HEK293 (cell line): ENCODE measurements at regions of chr6 and their contacts with region 1.

Region 1: DNA sequence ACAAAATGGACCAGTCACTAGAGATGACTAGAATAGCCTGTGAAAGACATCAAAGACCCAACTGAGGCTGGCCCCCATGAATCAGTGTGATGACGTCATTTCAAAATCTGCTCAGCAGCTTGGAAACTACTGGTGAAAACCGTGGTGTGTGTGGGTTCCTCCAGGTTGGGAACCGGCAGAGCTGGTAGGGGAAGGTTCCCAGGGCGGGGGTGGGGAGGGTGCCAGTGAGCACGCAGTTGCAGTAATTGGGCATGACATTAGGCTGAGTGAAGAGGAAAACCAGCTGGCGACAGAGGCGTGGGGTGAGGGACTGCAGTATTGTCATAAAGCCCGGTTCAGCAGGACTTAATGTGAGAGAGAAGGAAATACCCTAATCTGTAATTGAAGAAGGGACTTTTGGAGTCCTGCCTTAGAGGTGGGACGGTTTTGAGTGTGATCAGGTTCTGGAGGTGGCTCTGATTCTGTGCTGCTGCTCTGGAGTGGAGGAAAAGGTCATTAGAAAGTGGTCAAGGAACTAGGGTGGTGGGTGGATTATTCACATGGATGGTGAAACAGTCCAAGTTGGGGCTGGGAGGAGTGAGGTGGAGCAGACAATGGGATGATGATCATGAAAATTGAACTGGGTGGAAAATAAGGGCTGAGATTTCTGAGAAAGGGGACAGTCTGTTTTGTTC is 52.0 kb upstream of the MTHFD1L start:
- H3K4me3 ChIP-seq: no peak overlapping the region
- H3K27ac ChIP-seq: no peak overlapping the region; the same call in 1 of the 2 replicates
- H3K4me1 ChIP-seq: peaks cover 11% of the 10 kb centered on the region; the same call in 1 of the 2 replicates
- CTCF ChIP-seq: no peak

Region 2: DNA sequence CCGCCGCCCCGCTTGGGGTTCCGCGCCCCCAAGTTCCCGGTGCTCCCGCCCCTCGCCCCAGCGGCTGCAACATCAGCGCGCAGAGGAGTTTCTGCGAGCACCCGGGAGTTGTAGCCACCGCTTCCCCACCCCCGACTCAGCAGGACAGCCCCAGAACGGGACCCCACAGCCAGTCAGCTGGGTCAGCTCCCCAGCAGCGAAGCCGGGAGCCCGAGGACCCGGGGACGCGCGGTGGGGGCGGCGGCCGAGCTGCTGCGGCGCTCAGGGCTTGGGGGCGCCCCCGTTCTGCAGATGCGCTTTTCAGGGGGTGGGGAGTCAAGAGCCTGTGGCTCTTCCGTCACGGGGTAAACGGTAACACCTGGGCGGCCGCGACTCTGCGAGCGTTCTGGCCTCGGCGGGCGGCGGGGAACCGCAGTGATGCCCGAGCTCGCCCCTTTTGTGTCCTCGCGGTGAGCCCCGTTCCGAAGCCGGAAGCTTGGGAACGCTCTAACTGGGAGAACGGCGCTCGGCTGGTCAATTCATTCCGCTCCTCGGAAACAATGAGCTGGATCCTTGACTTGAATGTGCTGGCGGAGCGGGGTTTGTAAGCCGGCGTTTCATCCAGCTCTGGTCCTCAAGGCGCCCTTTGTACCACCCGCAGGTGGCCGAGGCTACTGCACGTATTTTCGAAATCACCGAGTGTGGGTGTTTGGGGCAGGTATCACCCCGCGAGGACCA is 213.0 kb before region 1 on chr6:
- CTCF ChIA-PET with region 1: interaction called, 12 read pairs
- POLR2A ChIA-PET with region 1: interaction called, 5 read pairs
- H3K4me3 ChIP-seq: peak overlapping the region; percentile 72
- H3K27ac ChIP-seq: peak overlapping the region; percentile 90
- H3K4me1 ChIP-seq: peaks cover 7% of the 10 kb centered on the region
- CTCF ChIP-seq: peak; percentile 65

Region 3: DNA sequence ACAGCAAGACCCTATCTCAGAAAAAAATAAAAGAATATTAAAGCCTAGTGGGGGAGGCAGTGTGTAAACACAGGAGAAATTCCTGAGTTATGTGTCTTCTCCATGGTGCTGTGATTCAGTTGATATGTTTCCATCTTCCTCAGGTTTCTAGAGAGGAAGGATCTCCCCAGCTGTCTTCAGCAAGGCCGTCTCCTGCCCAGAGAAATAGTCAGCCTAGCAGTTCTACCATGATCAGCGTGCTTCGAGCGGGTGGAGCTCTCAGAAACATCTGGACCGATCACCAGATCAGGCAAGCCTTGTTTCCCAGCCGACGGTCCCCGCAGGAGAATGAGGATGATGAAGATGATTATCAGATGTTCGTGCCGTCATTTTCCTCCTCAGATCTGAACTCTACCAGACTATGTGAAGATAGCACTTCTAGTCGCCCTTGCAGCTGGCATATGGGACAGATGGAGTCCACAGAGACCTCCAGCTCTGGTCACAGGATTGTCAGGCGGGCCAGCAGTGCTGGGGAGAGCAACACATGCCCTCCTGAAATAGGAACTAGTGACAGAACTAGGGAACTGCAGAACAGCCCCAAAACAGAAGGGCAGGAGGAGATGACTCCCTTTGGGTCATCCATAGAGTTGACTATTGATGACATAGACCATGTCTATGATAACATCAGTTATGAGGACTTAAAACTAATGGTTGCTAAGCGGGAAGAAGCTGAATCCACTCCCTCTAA is 17.1 kb after region 1 on chr6:
- CTCF ChIA-PET with region 1: interaction called, 11 read pairs
- POLR2A ChIA-PET with region 1: no interaction called
- H3K4me3 ChIP-seq: no peak overlapping the region
- H3K27ac ChIP-seq: no peak overlapping the region
- H3K4me1 ChIP-seq: no peaks in the 10 kb centered on the region
- CTCF ChIP-seq: no peak

Region 4: GRCh38 chr6:150891888-150892485 is 78.5 kb after region 1 on chr6:
- CTCF ChIA-PET with region 1: interaction called, 58 read pairs
- POLR2A ChIA-PET with region 1: no interaction called
- H3K4me3 ChIP-seq: no peak overlapping the region
- H3K27ac ChIP-seq: no peak overlapping the region
- H3K4me1 ChIP-seq: peaks cover 6% of the 10 kb centered on the region; the same call in 1 of the 2 replicates
- CTCF ChIP-seq: peak; percentile 64

Region 5: DNA sequence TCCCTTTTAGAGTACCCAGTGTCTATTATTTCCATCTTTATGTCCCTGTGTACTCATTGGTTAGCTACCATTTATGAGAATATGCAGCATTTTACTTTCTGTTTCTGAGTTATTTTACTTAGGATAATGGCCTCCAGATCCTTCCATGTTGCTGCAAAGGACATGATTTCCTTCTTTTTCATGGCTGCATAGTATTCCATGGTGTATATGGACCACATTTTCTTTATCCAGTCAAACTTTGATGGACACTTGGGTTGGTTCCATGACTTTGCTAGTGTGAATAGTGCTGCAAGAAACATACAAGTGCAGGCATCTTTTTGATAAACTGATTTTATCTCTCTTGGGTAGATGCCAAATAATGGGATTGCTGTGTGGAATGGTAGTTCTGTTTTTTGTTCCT is 522.5 kb after region 1 on chr6:
- CTCF ChIA-PET with region 1: interaction called, 31 read pairs
- POLR2A ChIA-PET with region 1: no interaction called
- H3K4me3 ChIP-seq: no peak overlapping the region
- H3K27ac ChIP-seq: no peak overlapping the region
- H3K4me1 ChIP-seq: no peaks in the 10 kb centered on the region
- CTCF ChIP-seq: no peak